ENCODE measurements at regions of chr11 and their contacts with region 1.

Region 1: GRCh38 chr11:110296226-110297075 is at the start of gene RDX:
- DNase-seq: peak; percentile 83
- ATAC-seq: peak; percentile 84
- H3K4me3 ChIP-seq: peak within 1 kb of the TSS; percentile 50 to 93 (median 86)
- H3K4me3 Mint-ChIP-seq: peak within 1 kb of the TSS; percentile 94
- H3K27ac ChIP-seq: peak within 1 kb of the TSS; percentile 18 to 70
- H3K27ac Mint-ChIP-seq: peak within 1 kb of the TSS; percentile 80
- H3K4me1 ChIP-seq: peaks cover 8 to 12% of the 10 kb centered on the region in 2 donors
- H3K4me1 Mint-ChIP-seq: peaks cover 24% of the 10 kb centered on the region
- H3K27me3 ChIP-seq: peaks cover 0 to 3% (median 0%) of the 10 kb centered on the region in 4 experiments
- H3K27me3 Mint-ChIP-seq: no peaks in the 10 kb centered on the region
- CTCF ChIP-seq: no peak
- total RNA-seq, gene RDX: 34.8 and 39.2 TPM in 2 replicates

Region 2: GRCh38 chr11:110261195-110262140 is 35.0 kb before region 1 on chr11:
- CTCF ChIA-PET with region 1: no interaction called
- POLR2A ChIA-PET with region 1: no interaction called
- intact Hi-C with region 1: loop called (anchors 5 kb)
- DNase-seq: no peak
- ATAC-seq: no peak
- H3K4me3 ChIP-seq: no peak overlapping the region
- H3K4me3 Mint-ChIP-seq: no peak overlapping the region
- H3K27ac ChIP-seq: no peak overlapping the region
- H3K27ac Mint-ChIP-seq: no peak overlapping the region
- H3K4me1 ChIP-seq: no peaks in the 10 kb centered on the region
- H3K4me1 Mint-ChIP-seq: no peaks in the 10 kb centered on the region
- H3K27me3 ChIP-seq: no peaks in the 10 kb centered on the region
- H3K27me3 Mint-ChIP-seq: no peaks in the 10 kb centered on the region
- CTCF ChIP-seq: no peak

Region 3: GRCh38 chr11:110329445-110329844 is 33.0 kb after region 1 on chr11:
- CTCF ChIA-PET with region 1: no interaction called
- POLR2A ChIA-PET with region 1: interaction called, 5 read pairs
- intact Hi-C with region 1: loop called (anchors 2 kb)
- DNase-seq: no peak
- ATAC-seq: no peak
- H3K4me3 ChIP-seq: no peak overlapping the region
- H3K4me3 Mint-ChIP-seq: no peak overlapping the region
- H3K27ac ChIP-seq: no peak overlapping the region
- H3K27ac Mint-ChIP-seq: peak overlapping the region; percentile 33
- H3K4me1 ChIP-seq: peaks cover 5 to 9% of the 10 kb centered on the region in 2 donors
- H3K4me1 Mint-ChIP-seq: peaks cover 20% of the 10 kb centered on the region
- H3K27me3 ChIP-seq: no peaks in the 10 kb centered on the region
- H3K27me3 Mint-ChIP-seq: no peaks in the 10 kb centered on the region
- CTCF ChIP-seq: no peak